ENCODE measurements at regions of chr11 and their contacts with region 1.

Region 1: DNA sequence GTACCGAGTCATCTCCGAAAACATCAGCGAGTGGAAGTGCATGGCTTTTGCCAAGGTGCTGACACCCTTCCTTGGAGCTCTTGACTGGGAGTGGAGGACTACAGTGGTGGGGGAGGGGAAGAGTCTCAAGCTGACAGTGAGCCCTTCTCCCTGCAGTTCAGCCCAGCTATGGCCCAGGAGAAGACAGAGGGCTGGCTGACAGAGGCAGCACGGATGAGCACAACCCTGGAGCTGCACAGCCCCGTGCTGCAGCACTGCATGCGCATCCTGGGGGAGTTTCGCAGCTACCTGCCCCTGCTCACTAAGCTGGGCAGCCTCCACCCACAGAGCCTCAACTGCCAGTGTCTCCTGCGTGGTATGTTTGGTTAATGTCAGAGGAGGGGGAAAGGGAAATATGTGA is 41.4 kb downstream of the DNHD1 start:
- DNase-seq: no peak
- H3K4me3 ChIP-seq: no peak overlapping the region
- H3K27ac ChIP-seq: no peak overlapping the region
- H3K4me1 ChIP-seq: no peaks in the 10 kb centered on the region
- H3K27me3 ChIP-seq: no peaks in the 10 kb centered on the region
- CTCF ChIP-seq: no peak

Region 2: GRCh38 chr11:6489306-6489705 is 49.1 kb before region 1 on chr11:
- CTCF ChIA-PET with region 1: no interaction called
- dilution Hi-C with region 1: loop called (anchors 5 kb)
- in situ Hi-C with region 1: no loop called
- intact Hi-C with region 1: no loop called
- DNase-seq: no peak
- H3K4me3 ChIP-seq: no peak overlapping the region
- H3K27ac ChIP-seq: no peak overlapping the region
- H3K4me1 ChIP-seq: no peaks in the 10 kb centered on the region
- H3K27me3 ChIP-seq: no peaks in the 10 kb centered on the region
- CTCF ChIP-seq: no peak

Region 3: DNA sequence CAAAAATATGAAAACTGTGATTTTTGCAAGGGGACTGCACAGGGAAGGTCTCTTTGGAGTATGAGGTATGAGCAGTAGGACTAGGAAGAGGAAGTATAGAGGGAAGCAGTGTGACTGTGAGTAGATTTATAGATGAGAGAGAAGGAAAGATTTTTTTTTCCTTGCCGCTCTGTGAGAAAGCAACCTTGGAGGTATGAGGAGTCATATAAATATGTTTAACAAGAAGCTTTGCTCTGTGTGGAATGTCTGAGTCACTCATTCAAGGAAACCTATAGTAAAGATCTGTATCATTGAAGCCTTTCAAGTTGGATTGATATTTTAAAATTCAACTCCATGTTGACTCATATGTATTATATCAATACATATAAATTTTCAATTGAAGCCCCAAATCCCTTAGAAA is 15.2 kb before region 1 on chr11:
- CTCF ChIA-PET with region 1: no interaction called
- dilution Hi-C with region 1: no loop called
- in situ Hi-C with region 1: no loop called
- intact Hi-C with region 1: no loop called
- DNase-seq: peak; percentile 52
- H3K4me3 ChIP-seq: no peak overlapping the region
- H3K27ac ChIP-seq: no peak overlapping the region
- H3K4me1 ChIP-seq: no peaks in the 10 kb centered on the region
- H3K27me3 ChIP-seq: no peaks in the 10 kb centered on the region
- CTCF ChIP-seq: no peak